ENCODE measurements at regions of chr6 and their contacts with region 1.

Region 1: GRCh38 chr6:71721642-71722041 is 164.7 kb upstream of the RIMS1 start:
- DNase-seq: no peak
- H3K4me3 ChIP-seq: no peak overlapping the region
- H3K27ac ChIP-seq: no peak overlapping the region
- H3K4me1 ChIP-seq: no peaks in the 10 kb centered on the region
- H3K27me3 ChIP-seq: peaks cover 0 to 3% of the 10 kb centered on the region in 2 experiments
- CTCF ChIP-seq: no peak
- POLR2A ChIP-seq: no peak

Region 2: GRCh38 chr6:71181565-71181964 is 540.1 kb before region 1 on chr6:
- CTCF ChIA-PET with region 1: no interaction called
- POLR2A ChIA-PET with region 1: no interaction called
- dilution Hi-C with region 1: no loop called
- intact Hi-C with region 1: loop called (anchors 5 kb)
- DNase-seq: no peak
- H3K4me3 ChIP-seq: no peak overlapping the region
- H3K27ac ChIP-seq: no peak overlapping the region
- H3K4me1 ChIP-seq: no peaks in the 10 kb centered on the region
- H3K27me3 ChIP-seq: peaks cover 0 to 2% of the 10 kb centered on the region in 2 experiments
- CTCF ChIP-seq: no peak
- POLR2A ChIP-seq: no peak

Measured in endothelial cell of umbilical vein (primary cell).